T-cell (primary cell): ENCODE measurements at regions of chr6 and their contacts with region 1.

Region 1: DNA sequence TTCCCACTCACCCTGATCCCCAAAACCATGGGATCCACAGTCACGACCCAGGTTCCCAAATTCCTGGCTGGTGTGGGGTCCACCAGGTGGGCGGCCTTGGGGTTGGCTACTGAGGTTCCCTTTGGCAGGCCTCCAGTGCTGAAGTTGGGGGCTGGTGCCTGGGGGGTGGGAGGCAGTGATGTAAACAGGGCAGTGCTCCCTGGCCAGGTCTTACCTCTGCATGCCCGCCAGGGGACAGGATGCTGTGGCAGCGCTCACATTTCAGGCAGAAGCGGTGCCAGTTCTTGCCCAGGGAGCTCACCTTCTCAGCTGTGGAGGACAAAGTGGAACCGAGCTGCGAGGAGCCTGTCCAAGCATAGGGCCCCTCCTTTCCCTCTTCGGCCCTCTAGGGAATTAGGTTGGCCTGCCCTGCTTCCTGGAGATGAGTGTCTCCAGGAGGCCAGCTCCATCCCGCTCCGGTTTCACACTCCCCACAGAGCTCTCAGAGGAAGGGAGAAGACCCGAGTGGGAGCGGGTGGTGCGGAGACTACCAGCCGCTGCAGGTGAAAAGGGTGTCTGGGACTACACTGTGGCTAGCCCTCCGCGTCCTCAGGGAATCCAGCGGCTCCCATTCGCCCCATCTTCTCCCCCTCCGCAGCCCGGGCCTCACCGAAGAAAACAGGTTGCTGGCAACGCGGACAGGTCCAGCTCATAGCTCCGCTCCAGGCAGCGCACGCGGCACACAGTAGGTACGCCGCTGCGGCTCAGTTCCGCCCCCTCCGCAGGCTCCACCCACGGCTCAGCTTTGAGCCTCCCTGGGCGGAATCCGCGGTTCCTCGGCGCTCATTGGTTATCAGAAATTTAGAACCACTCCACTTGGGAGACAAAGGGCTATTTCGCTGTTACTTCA is at the start of gene CRIP3:
- DNase-seq: peak in 34 of 35 experiments; percentile 18 to 65 (median 42)
- ATAC-seq: peak; percentile 84 to 88 (median 87)
- H3K4me3 ChIP-seq: peak within 1 kb of the TSS; percentile 54 to 55
- H3K4me3 Mint-ChIP-seq: peak within 1 kb of the TSS; percentile 78 to 80 (median 79)
- H3K27ac ChIP-seq: no peak within 1 kb of the TSS
- H3K27ac Mint-ChIP-seq: peak within 1 kb of the TSS in 1 of 2 donors; percentile 31
- H3K4me1 ChIP-seq: peaks cover 0 to 17% of the 10 kb centered on the region in 2 experiments
- H3K4me1 Mint-ChIP-seq: peaks cover 10 to 18% (median 13%) of the 10 kb centered on the region in 3 donors
- H3K27me3 ChIP-seq: peaks cover 0 to 18% of the 10 kb centered on the region in 2 experiments
- H3K27me3 Mint-ChIP-seq: peaks cover 0 to 2% of the 10 kb centered on the region in 2 donors
- total RNA-seq, gene CRIP3: 1.3 to 4.2 (median 2.8) TPM

Region 2: GRCh38 chr6:42332916-42333315 is 975.4 kb before region 1 on chr6:
- CTCF ChIA-PET with region 1: no interaction called
- POLR2A ChIA-PET with region 1: no interaction called
- DNase-seq: no peak
- ATAC-seq: no peak
- H3K4me3 ChIP-seq: no peak overlapping the region
- H3K4me3 Mint-ChIP-seq: no peak overlapping the region
- H3K27ac ChIP-seq: no peak overlapping the region
- H3K27ac Mint-ChIP-seq: no peak overlapping the region
- H3K4me1 ChIP-seq: peaks cover 0 to 16% of the 10 kb centered on the region in 2 experiments
- H3K4me1 Mint-ChIP-seq: peaks cover 44 to 51% (median 46%) of the 10 kb centered on the region in 3 donors
- H3K27me3 ChIP-seq: no peaks in the 10 kb centered on the region
- H3K27me3 Mint-ChIP-seq: no peaks in the 10 kb centered on the region

Region 3: DNA sequence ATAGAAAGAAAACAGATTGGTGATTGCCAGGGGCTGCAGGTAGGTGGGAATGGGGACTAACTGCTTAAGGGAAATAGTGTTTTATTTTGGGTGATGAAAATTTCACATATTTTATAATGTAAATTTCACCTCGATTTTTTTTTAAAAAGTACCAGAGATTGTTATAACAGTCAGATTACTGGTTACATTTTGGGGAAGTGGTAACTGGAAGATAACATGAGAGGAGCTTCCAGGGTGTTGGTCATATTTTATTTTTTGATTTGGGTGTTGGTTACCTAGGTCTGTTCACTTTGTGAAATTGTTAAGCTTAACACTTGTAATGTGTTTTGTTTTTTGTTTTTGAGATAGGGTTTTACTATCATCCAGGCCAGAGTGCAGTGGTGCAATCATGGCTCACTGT is 17.5 kb after region 1 on chr6:
- CTCF ChIA-PET with region 1: no interaction called
- POLR2A ChIA-PET with region 1: no interaction called
- DNase-seq: no peak
- ATAC-seq: no peak
- H3K4me3 ChIP-seq: no peak overlapping the region
- H3K4me3 Mint-ChIP-seq: no peak overlapping the region
- H3K27ac ChIP-seq: no peak overlapping the region
- H3K27ac Mint-ChIP-seq: no peak overlapping the region
- H3K4me1 ChIP-seq: no peaks in the 10 kb centered on the region
- H3K4me1 Mint-ChIP-seq: peaks cover under 1 to 2% (median under 1%) of the 10 kb centered on the region in 3 donors
- H3K27me3 ChIP-seq: no peaks in the 10 kb centered on the region
- H3K27me3 Mint-ChIP-seq: no peaks in the 10 kb centered on the region

Region 4: DNA sequence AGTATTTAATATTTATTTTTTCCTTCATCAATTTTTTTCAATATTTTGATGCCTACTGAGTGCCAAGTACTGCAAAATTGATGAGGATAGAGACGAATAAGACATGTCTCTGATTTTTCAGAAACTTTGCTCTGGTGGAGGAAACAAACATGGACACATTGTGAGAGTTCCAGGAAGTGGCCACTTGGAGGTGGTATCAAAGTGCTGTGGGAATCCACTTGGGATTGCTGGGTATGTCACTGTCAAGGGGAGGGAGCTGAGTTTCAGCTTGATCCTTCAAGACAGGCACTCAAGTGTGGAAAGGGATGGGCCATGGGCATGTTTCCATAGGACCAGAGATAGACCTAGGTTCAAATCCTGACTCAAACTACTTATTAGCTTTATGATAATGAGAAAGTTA is 94.5 kb after region 1 on chr6:
- CTCF ChIA-PET with region 1: interaction called, 3 to 12 read pairs
- POLR2A ChIA-PET with region 1: no interaction called
- DNase-seq: no peak
- ATAC-seq: no peak
- H3K4me3 ChIP-seq: no peak overlapping the region
- H3K4me3 Mint-ChIP-seq: no peak overlapping the region
- H3K27ac ChIP-seq: no peak overlapping the region
- H3K27ac Mint-ChIP-seq: no peak overlapping the region
- H3K4me1 ChIP-seq: no peaks in the 10 kb centered on the region
- H3K4me1 Mint-ChIP-seq: peaks cover 0 to 3% (median 2%) of the 10 kb centered on the region in 3 donors
- H3K27me3 ChIP-seq: peaks cover 0 to 3% of the 10 kb centered on the region in 2 experiments
- H3K27me3 Mint-ChIP-seq: peaks cover 24% of the 10 kb centered on the region in 2 donors

Region 5: GRCh38 chr6:43477235-43478007 is 169.1 kb after region 1 on chr6 and contains the start of gene TJAP1:
- CTCF ChIA-PET with region 1: no interaction called
- POLR2A ChIA-PET with region 1: interaction called in 1 of 2 experiments, 14 read pairs
- DNase-seq: peak; percentile 88 to 99 (median 96)
- ATAC-seq: peak; percentile 100
- H3K4me3 ChIP-seq: peak within 1 kb of the TSS; percentile 69 to 78
- H3K4me3 Mint-ChIP-seq: peak within 1 kb of the TSS; percentile 92 to 99 (median 93)
- H3K27ac ChIP-seq: peak within 1 kb of the TSS; percentile 91
- H3K27ac Mint-ChIP-seq: peak within 1 kb of the TSS; percentile 75 to 94
- H3K4me1 ChIP-seq: peaks cover 11 to 18% of the 10 kb centered on the region in 2 experiments
- H3K4me1 Mint-ChIP-seq: peaks cover 45 to 51% (median 47%) of the 10 kb centered on the region in 3 donors
- H3K27me3 ChIP-seq: peaks cover 0 to 4% of the 10 kb centered on the region in 2 experiments
- H3K27me3 Mint-ChIP-seq: no peaks in the 10 kb centered on the region
- total RNA-seq, gene TJAP1: 30.8 to 51.9 (median 50.6) TPM